ENCODE measurements at regions of chr10 and their contacts with region 1.

Region 1: DNA sequence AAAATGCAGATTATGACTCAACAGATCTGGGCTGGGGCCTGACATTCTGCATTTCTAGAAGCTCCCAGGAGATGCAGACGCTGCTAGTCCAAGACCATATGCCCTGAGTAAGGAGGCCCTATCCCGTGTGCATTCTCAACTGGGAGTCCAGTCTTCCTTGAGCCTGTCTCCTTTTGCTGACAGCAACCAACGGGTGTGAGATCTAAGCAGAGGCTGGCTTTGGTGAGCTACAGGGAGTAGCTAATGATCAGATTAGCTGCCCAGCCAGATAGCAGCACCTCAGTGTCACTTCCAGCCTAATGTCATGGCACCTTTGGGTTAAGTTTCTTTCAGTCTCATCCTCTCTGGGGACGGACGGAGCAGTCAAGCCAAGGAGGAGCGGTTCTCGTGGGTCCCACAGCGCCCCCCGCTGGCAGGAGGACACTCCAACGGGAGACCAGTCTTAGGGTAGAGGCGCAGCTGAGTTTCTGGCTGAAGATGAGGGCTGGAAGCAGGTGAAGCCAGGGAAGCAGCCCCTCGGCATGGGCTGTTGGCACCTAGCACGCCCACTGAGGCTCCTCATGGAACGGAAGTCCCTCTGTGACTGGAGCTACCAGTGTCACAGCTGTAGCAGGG is 154.0 kb downstream of the CCDC3 start:
- DNase-seq: peak; percentile 63 to 96
- H3K4me3 ChIP-seq: no peak overlapping the region
- H3K27ac ChIP-seq: no peak overlapping the region
- H3K4me1 ChIP-seq: peaks cover 0 to 4% (median 0%) of the 10 kb centered on the region in 4 experiments; a peak in 1 of 7 replicates
- H3K27me3 ChIP-seq: no peaks in the 10 kb centered on the region
- CTCF ChIP-seq: peak; percentile 89 to 95 (median 90)
- EP300 ChIP-seq: no peak
- POLR2A ChIP-seq: no peak
- RAD21 ChIP-seq: peak; percentile 69 to 81

Region 2: GRCh38 chr10:12717981-12718707 is 129.3 kb before region 1 on chr10:
- CTCF ChIA-PET with region 1: interaction called, 10 read pairs
- POLR2A ChIA-PET with region 1: no interaction called
- DNase-seq: no peak
- H3K4me3 ChIP-seq: no peak overlapping the region
- H3K27ac ChIP-seq: no peak overlapping the region
- H3K4me1 ChIP-seq: peaks cover 0 to 3% (median 0%) of the 10 kb centered on the region in 4 experiments; a peak in 1 of 7 replicates
- H3K27me3 ChIP-seq: no peaks in the 10 kb centered on the region
- CTCF ChIP-seq: peak in 2 of 3 experiments; percentile 12 to 54; a peak in 3 of 4 replicates
- EP300 ChIP-seq: no peak
- POLR2A ChIP-seq: no peak
- RAD21 ChIP-seq: peak; percentile 58 to 65

Region 3: DNA sequence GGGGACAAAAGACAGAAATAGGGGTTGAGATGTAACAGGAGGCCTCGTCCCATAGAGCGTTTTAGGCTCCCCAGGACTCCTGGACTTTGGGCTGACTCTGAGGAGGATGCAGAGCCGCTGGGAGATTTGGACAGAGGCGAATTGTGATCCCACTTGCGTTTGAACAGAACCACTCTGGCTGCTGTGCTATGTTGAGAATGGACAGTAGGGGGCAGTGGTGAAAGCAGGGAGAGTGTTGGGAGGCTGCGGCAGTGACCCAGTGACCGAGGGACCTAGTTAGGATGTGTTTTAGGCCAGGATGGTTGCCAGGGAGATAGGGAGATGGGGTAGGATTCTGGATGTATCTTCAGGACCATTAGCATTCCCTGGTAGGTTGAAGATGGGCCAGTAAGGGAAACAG is 117.6 kb before region 1 on chr10:
- CTCF ChIA-PET with region 1: interaction called, 12 read pairs
- POLR2A ChIA-PET with region 1: no interaction called
- DNase-seq: peak; percentile 15 to 88
- H3K4me3 ChIP-seq: no peak overlapping the region
- H3K27ac ChIP-seq: no peak overlapping the region
- H3K4me1 ChIP-seq: peaks cover 0 to 5% (median 1%) of the 10 kb centered on the region in 4 experiments; a peak in 5 of 7 replicates
- H3K27me3 ChIP-seq: no peaks in the 10 kb centered on the region
- CTCF ChIP-seq: peak; percentile 83 to 98 (median 87)
- EP300 ChIP-seq: no peak
- POLR2A ChIP-seq: no peak
- RAD21 ChIP-seq: peak; percentile 88 to 92

Region 4: DNA sequence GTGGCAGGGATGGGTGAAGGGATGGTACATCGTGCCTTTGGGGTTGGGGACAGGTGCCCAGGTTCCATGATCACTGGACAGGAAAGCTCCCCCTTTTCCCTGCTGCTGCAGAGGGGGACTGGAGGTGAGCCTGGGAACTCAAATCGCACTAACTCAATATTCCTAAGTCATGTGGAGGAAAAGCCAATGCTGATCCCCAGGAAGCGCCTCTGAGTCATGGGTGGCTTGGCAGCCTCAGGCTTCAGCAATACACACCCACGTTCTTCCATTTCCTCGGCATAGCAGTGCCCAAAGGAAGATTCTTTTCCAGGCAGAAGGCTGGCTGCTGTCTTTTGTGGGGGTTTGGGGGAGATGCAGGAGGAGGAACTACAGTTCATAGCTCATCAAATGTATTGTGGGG is 11.8 kb before region 1 on chr10:
- CTCF ChIA-PET with region 1: interaction called, 38 read pairs
- POLR2A ChIA-PET with region 1: interaction called, 3 read pairs
- DNase-seq: no peak
- H3K4me3 ChIP-seq: no peak overlapping the region
- H3K27ac ChIP-seq: no peak overlapping the region
- H3K4me1 ChIP-seq: peaks cover 0 to 4% (median 0%) of the 10 kb centered on the region in 4 experiments; a peak in 4 of 7 replicates
- H3K27me3 ChIP-seq: no peaks in the 10 kb centered on the region
- CTCF ChIP-seq: no peak
- EP300 ChIP-seq: no peak
- POLR2A ChIP-seq: no peak
- RAD21 ChIP-seq: no peak

Measured in H1 (cell line).